GM23248 (cell line): ENCODE measurements at regions of chr3 and their contacts with region 1.

Region 1: GRCh38 chr3:158845765-158846350 is 44.0 kb downstream of the MFSD1 start:
- DNase-seq: peak; percentile 41
- H3K4me3 ChIP-seq: no peak overlapping the region
- H3K27ac ChIP-seq: no peak overlapping the region
- H3K4me1 ChIP-seq: no peaks in the 10 kb centered on the region
- H3K27me3 ChIP-seq: no peaks in the 10 kb centered on the region

Region 2: GRCh38 chr3:158509891-158510290 is 336.0 kb before region 1 on chr3:
- in situ Hi-C with region 1: no loop called
- DNase-seq: no peak
- H3K4me3 ChIP-seq: no peak overlapping the region
- H3K27ac ChIP-seq: no peak overlapping the region
- H3K4me1 ChIP-seq: no peaks in the 10 kb centered on the region
- H3K27me3 ChIP-seq: no peaks in the 10 kb centered on the region

Region 3: GRCh38 chr3:158522221-158523136 is 323.4 kb before region 1 on chr3:
- in situ Hi-C with region 1: no loop called
- DNase-seq: peak; percentile 87
- H3K4me3 ChIP-seq: no peak overlapping the region
- H3K27ac ChIP-seq: no peak overlapping the region
- H3K4me1 ChIP-seq: peaks cover 23% of the 10 kb centered on the region
- H3K27me3 ChIP-seq: no peaks in the 10 kb centered on the region

Region 4: GRCh38 chr3:159804726-159805410 is 959.0 kb after region 1 on chr3:
- in situ Hi-C with region 1: loop called (anchors 25 kb)
- DNase-seq: peak; percentile 94
- H3K4me3 ChIP-seq: peak overlapping the region; percentile 25
- H3K27ac ChIP-seq: peak overlapping the region; percentile 50
- H3K4me1 ChIP-seq: peaks cover 31% of the 10 kb centered on the region
- H3K27me3 ChIP-seq: no peaks in the 10 kb centered on the region